ENCODE measurements at regions of chr4 and their contacts with region 1.

Region 1: DNA sequence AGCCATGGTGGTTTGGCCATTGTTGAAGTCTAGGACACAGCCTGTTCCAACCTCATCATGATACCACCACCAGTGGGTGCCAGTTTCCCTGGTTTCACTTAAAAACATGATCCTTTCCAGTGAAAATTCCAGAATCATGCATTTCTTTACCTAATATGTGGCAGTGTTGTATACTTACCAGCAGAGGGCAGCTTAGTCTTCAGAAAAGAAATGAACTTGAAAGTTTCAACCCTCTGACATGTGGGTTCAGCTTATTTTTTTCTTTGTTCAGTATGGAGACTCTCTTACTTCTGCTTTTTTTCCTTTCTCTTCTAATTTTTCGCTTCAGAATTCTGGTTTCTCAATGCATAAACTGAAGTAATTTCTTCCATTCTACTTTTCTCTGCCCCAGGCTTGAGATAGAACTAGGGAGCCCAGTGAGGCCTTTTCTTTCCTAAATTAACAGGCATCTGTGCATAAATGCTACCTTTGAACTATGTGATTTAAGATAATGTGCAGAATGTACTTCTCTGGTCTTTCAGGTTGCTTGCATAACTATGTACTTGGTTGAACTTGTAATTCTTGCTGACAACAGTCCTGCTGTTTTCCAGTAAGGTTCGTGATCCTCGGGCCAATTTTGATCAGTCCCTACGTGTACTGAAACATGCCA is 10.7 kb downstream of the LIAS start:
- DNase-seq: peak; percentile 24
- H3K4me3 Mint-ChIP-seq: no peak overlapping the region
- H3K27ac Mint-ChIP-seq: peak overlapping the region; percentile 37
- H3K4me1 Mint-ChIP-seq: peaks cover 12% of the 10 kb centered on the region
- H3K27me3 Mint-ChIP-seq: no peaks in the 10 kb centered on the region

Region 2: GRCh38 chr4:39527273-39528060 is 57.9 kb after region 1 on chr4 and contains the start of gene UGDH:
- CTCF ChIA-PET with region 1: interaction called, 5 read pairs
- intact Hi-C with region 1: loop called (anchors 2 kb)
- DNase-seq: peak; percentile 91
- H3K4me3 Mint-ChIP-seq: peak within 1 kb of the TSS; percentile 97
- H3K27ac Mint-ChIP-seq: peak within 1 kb of the TSS; percentile 81
- H3K4me1 Mint-ChIP-seq: peaks cover 18% of the 10 kb centered on the region
- H3K27me3 Mint-ChIP-seq: no peaks in the 10 kb centered on the region
- total RNA-seq, gene UGDH: 11.7 to 14.6 TPM

Region 3: GRCh38 chr4:39638354-39639240 is 169.0 kb after region 1 on chr4 and contains the start of gene SMIM14:
- CTCF ChIA-PET with region 1: interaction called, 10 read pairs
- intact Hi-C with region 1: loop called (anchors 1 kb)
- DNase-seq: peak; percentile 93
- H3K4me3 Mint-ChIP-seq: peak within 1 kb of the TSS; percentile 85
- H3K27ac Mint-ChIP-seq: peak within 1 kb of the TSS; percentile 69
- H3K4me1 Mint-ChIP-seq: peaks cover 24% of the 10 kb centered on the region
- H3K27me3 Mint-ChIP-seq: no peaks in the 10 kb centered on the region
- total RNA-seq, gene SMIM14: 2.7 to 3.9 TPM

Region 4: DNA sequence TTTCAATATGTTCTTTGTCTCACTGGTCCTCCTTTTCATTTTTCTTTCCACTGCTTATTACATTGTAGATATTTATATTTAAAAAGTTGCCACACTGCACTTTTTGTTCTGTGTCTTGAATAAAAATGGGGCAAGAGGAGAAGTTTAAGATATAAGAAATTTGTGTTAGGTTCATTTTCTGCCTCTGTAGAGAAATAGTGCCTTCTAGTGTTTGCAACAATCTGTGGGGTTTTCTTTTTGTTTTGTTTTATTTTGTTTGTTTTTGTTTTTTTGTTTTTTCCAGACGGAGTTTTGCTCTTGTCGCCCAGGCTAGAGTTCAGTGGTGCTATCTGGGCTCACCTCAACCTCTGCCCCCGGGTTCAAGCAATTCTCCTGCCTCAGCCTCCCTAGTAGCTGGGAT is 189.2 kb after region 1 on chr4:
- CTCF ChIA-PET with region 1: interaction called, 4 read pairs
- intact Hi-C with region 1: loop called (anchors 1 kb)
- DNase-seq: no peak
- H3K4me3 Mint-ChIP-seq: no peak overlapping the region
- H3K27ac Mint-ChIP-seq: no peak overlapping the region
- H3K4me1 Mint-ChIP-seq: peaks cover 5% of the 10 kb centered on the region
- H3K27me3 Mint-ChIP-seq: no peaks in the 10 kb centered on the region

Region 5: GRCh38 chr4:40325189-40326019 is 855.9 kb after region 1 on chr4:
- CTCF ChIA-PET with region 1: interaction called, 4 read pairs
- intact Hi-C with region 1: loop called (anchors 1 kb)
- DNase-seq: peak; percentile 82
- H3K4me3 Mint-ChIP-seq: no peak overlapping the region
- H3K27ac Mint-ChIP-seq: no peak overlapping the region
- H3K4me1 Mint-ChIP-seq: peaks cover 27% of the 10 kb centered on the region
- H3K27me3 Mint-ChIP-seq: no peaks in the 10 kb centered on the region